ENCODE measurements at regions of chr1 and their contacts with region 1.

Region 1: GRCh38 chr1:223683586-223684487 is 18.3 kb upstream of the CAPN8 start:
- DNase-seq: peak; percentile 62
- ATAC-seq: no peak
- H3K4me3 ChIP-seq: no peak overlapping the region
- H3K4me3 Mint-ChIP-seq: no peak overlapping the region
- H3K27ac ChIP-seq: no peak overlapping the region
- H3K27ac Mint-ChIP-seq: no peak overlapping the region
- H3K4me1 ChIP-seq: no peaks in the 10 kb centered on the region
- H3K4me1 Mint-ChIP-seq: peaks cover 2% of the 10 kb centered on the region
- H3K27me3 ChIP-seq: peaks cover 0 to 11% (median 2%) of the 10 kb centered on the region in 4 experiments
- H3K27me3 Mint-ChIP-seq: peaks cover 30% of the 10 kb centered on the region
- CTCF ChIP-seq: peak; percentile 67

Region 2: DNA sequence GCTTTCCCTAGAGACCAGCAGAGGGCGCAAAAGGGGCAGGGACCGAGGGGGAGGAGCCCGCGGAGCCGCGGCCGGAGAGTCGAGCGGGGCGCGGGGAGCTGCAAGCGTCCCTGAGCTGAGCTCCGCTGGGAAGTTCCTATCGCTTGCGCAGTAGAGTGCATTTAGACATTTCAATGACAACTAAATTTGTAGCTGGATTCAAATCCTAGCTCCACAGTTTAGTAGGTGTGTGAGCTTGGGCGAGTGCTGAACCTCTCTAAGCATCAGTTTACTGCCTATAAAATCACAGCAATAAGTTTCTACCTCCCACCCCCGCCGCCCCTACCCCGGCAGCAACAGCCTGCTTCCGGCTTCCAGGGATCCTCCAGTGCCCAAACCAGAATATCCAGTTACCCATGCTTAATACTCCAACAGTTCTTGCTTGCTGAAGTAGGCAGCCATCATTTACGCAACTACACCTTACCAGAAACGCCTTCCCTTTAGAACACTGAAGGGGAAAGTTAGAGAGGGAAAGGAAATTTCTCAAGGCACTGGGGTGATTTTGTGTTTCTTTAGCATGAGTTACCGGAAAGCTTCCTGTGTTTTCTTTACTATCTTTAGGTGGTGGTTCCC is 549.9 kb before region 1 on chr1:
- CTCF ChIA-PET with region 1: interaction called, 12 read pairs
- POLR2A ChIA-PET with region 1: no interaction called
- intact Hi-C with region 1: no loop called
- DNase-seq: peak; percentile 83
- ATAC-seq: peak; percentile 92
- H3K4me3 ChIP-seq: peak overlapping the region; percentile 13 to 58 (median 19)
- H3K4me3 Mint-ChIP-seq: peak overlapping the region; percentile 83
- H3K27ac ChIP-seq: no peak overlapping the region
- H3K27ac Mint-ChIP-seq: no peak overlapping the region
- H3K4me1 ChIP-seq: peaks cover 16 to 19% of the 10 kb centered on the region in 2 donors
- H3K4me1 Mint-ChIP-seq: peaks cover 22% of the 10 kb centered on the region
- H3K27me3 ChIP-seq: peaks cover 0 to 54% (median 30%) of the 10 kb centered on the region in 4 experiments
- H3K27me3 Mint-ChIP-seq: peaks cover 84% of the 10 kb centered on the region
- CTCF ChIP-seq: peak; percentile 12